BJ (cell line): ENCODE measurements at regions of chr6 and their contacts with region 1.

Region 1: DNA sequence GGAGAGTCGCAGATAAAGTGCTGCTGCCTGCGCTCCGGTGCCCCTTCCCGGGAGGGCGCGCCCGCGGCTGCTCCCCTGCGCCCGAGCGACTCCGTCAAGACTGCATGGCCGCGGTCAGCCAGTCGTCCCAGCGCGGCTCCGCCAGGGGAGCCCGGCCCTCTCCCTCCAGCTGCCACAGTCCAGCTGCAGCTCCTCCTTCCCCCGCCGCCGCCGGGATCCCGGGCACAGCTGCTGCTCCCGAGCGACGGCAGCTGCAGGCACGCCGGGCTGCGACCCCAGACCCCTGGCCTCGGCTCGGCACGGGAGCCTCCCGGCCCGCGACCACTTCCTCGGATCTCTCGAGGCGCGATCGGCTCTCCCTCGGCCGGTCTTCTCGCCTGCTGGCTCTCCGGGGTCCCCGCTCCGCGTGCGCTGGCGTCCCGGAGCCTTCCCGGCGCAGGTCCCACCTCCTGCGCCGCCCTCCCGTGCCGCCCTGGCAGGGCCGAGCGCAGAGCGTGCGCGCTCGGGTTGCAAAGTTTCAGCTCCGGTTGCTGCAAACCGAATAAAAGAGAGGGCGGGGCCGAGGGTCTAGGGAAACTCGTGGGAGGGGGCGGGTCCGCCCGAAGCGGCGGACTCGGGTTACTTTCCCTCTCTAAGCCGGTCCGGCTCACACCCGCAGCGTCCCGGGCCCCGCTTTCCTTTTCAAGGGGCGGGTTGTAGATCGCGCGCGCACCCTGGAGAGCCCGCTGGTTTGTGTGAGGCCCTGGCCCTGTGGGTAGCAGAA is at the start of gene CNKSR3:
- DNase-seq: peak; percentile 72
- H3K4me3 ChIP-seq: peak within 1 kb of the TSS; percentile 58
- H3K27me3 ChIP-seq: no peaks in the 10 kb centered on the region
- CTCF ChIP-seq: peak; percentile 21; the same call in 1 of the 2 replicates
- polyA plus RNA-seq, gene CNKSR3: 5.2 and 5.6 TPM in 2 replicates

Region 2: DNA sequence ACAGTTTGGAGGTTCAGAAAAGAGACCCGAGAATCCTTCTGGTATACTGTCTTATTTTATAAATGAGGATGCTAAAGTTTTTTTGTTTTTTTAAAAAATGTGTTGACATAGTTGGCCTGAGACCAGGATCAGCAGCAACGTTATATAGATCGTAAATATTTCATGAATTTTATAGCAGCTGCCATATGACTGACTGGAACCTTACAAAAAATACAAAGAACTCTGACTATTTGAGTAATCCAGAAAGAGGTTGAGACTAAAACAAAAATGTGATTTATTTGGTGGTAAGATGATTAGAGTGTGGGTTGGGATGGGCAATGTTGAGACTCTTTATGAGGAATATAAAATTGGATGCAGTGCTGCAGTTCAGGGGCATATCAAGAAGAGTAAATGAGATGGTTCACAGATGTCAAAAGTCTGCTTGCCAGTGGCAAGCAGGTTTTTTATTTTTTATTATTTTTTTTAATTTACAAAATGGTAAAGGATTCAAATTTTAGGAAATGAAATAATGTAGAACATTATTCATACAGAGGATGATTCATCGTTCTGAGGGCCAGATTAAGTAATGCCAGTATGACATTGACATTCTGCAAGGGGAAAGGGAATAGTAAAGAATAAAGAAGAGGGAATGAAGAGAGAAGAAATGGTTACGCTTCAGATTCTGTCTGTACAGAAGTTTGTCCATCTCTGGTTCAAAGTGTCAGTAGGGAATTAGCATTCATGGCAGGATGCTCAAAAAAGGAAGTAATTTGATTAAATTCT is 281.4 kb after region 1 on chr6:
- CTCF ChIA-PET with region 1: no interaction called
- POLR2A ChIA-PET with region 1: interaction called, 22 read pairs
- DNase-seq: no peak
- H3K4me3 ChIP-seq: no peak overlapping the region
- H3K27me3 ChIP-seq: no peaks in the 10 kb centered on the region
- CTCF ChIP-seq: no peak

Region 3: GRCh38 chr6:155314773-155315515 is 804.6 kb after region 1 on chr6:
- CTCF ChIA-PET with region 1: no interaction called
- POLR2A ChIA-PET with region 1: interaction called, 18 read pairs
- DNase-seq: peak; percentile 37
- H3K4me3 ChIP-seq: peak overlapping the region; percentile 75
- H3K27me3 ChIP-seq: no peaks in the 10 kb centered on the region
- CTCF ChIP-seq: no peak